Ovary (tissue), 10 donors: ENCODE measurements at regions of chr2 and their contacts with region 1.

Region 1: DNA sequence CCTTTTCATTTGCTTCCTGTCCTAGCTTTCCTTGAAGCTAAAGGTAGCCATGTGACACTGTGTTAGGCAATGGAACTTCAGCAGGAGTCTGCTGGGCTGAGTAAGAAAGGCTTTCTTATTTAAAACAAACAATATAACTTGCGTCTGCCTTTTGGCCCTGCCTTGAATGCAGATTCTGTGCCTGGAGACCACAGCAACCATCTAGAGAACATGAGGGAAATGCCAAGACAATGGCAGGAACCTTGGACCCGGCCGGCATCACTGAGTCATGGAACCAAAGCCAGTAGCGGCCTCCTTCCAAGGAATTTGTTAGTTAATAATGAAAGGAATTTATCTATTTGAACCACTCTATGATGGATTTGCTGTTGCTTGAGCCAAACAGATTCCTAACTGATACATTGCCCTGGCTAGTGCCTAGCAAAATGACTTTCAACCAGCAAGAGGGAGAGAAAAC is 207.5 kb upstream of the EPHA4 start:
- DNase-seq: no peak
- H3K4me3 ChIP-seq: no peak overlapping the region
- H3K27ac ChIP-seq: no peak overlapping the region
- H3K4me1 ChIP-seq: no peaks in the 10 kb centered on the region
- H3K27me3 ChIP-seq: no peaks in the 10 kb centered on the region
- CTCF ChIP-seq: no peak
- EP300 ChIP-seq: no peak
- POLR2A ChIP-seq: no peak

Region 2: DNA sequence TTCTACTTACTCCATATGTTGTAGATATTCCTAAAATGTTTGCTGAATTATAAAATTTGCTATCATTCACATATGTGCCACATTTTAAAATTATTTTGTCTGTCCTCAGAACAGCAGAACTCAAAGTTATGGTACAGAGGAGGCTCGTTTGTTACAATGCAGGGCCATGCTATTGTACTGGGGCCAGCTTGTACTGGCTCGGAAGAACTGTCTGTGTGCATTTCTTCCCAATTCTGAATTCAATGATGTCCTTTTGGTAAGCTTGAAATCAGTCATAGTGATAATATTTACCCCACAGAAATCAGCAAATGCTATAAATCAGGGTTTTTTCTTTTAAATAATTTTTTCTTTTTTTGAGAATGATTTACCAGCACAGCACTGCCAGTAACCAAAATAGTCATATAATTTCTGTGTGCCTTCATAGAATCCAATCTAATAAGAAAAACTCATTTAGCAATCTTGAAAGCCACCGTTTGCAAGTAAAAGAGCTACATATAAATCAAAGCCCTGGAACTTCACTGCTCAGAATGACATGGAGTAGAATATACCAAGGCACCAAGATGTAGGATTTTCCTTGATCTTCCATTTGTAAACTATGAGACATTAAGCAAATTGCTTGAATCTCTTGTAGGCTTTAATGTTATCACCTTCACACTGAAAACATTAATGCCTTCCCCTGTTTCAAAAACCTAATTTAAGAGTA is 116.8 kb before region 1 on chr2:
- intact Hi-C with region 1: loop called in 1 of 4 experiments (anchors 10 kb)
- DNase-seq: no peak
- H3K4me3 ChIP-seq: no peak overlapping the region
- H3K27ac ChIP-seq: no peak overlapping the region
- H3K4me1 ChIP-seq: no peaks in the 10 kb centered on the region
- H3K27me3 ChIP-seq: no peaks in the 10 kb centered on the region
- CTCF ChIP-seq: no peak
- EP300 ChIP-seq: no peak
- POLR2A ChIP-seq: no peak